ENCODE measurements at regions of chr19 and their contacts with region 1.

Region 1: GRCh38 chr19:17149393-17150135 is 65.6 kb upstream of the USE1 start:
- DNase-seq: no peak
- ATAC-seq: peak in 3 of 4 donors; percentile 24 to 49 (median 33)
- H3K4me3 ChIP-seq: no peak overlapping the region
- H3K27ac ChIP-seq: no peak overlapping the region
- H3K4me1 ChIP-seq: peaks cover 0 to 1% (median 0%) of the 10 kb centered on the region in 4 donors
- H3K27me3 ChIP-seq: no peaks in the 10 kb centered on the region
- CTCF ChIP-seq: no peak
- POLR2A ChIP-seq: no peak

Region 2: DNA sequence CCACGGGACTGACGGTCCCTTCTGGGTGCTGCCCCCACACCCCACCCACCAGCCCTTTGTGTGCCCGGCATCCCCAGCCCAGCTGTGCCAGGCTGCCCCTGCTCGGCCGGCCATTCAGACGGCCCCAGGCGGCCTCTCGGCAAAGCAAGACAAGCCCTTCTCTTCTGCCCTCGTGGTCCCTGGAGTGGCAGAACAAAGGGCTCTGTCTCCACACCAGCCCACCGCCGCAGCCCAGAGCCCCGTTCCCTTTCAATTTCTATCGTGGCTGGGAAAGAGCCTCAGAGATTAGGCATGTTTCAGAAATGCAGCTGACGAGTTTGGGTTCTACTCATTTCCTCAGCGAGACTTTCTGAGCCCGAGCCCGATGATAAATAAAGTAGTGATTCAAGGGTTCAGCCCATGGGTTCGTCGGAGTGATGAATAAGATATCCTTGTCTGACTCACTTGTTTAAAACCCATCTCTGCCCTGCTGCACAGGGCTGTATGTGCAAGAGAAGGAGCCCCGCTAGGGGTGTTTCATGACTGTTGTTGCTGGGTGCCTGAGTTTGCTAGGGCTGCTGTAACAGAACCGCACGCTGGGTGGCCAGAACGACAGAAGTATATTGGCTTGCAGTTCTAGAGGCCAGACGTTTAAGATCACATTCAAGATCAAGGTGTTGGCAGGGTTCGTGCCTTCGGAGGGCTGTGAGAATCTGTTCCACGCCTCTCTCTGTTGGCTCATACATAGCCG is 69.7 kb before region 1 on chr19:
- intact Hi-C with region 1: loop called in 1 of 2 experiments (anchors 10 kb)
- DNase-seq: peak in 1 of 3 donors; percentile 33
- ATAC-seq: no peak
- H3K4me3 ChIP-seq: no peak overlapping the region
- H3K27ac ChIP-seq: peak overlapping the region; percentile 33 to 79 (median 40)
- H3K4me1 ChIP-seq: peaks cover 0 to 36% (median 11%) of the 10 kb centered on the region in 4 donors
- H3K27me3 ChIP-seq: no peaks in the 10 kb centered on the region
- CTCF ChIP-seq: peak in 2 of 4 donors; percentile 6 to 7
- POLR2A ChIP-seq: no peak

Region 3: DNA sequence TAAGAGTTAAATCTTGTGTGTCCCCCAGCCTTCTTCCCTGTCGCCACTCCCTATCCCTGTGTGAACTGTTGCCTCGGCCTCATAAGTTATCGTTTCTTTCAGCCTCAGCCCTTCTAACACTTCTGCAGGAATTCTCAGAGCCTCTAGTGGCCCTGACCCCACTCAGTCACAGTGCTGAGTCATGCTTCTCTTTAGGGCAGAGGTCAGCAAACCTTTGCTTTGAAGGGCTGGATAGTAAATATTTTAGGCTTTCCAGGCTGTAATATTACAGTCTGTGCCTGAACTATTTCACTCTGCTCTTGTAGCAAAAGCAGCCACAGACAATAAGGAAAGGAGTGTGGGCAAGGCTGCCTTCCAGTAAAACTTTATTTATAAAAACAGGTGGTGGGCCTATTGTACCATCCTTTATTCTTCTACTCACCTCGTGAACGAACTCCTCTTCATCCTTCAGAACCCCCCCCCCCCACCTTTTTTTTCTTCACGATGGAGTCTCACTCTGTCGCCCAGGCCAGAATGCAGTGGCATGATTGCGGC is 51.9 kb before region 1 on chr19:
- intact Hi-C with region 1: no loop called
- DNase-seq: peak in 1 of 3 donors; percentile 77
- ATAC-seq: peak; percentile 92 to 96 (median 95)
- H3K4me3 ChIP-seq: no peak overlapping the region
- H3K27ac ChIP-seq: peak overlapping the region; percentile 24 to 68 (median 57)
- H3K4me1 ChIP-seq: peaks cover 0 to 26% (median 9%) of the 10 kb centered on the region in 4 donors
- H3K27me3 ChIP-seq: no peaks in the 10 kb centered on the region
- CTCF ChIP-seq: no peak
- POLR2A ChIP-seq: no peak